Sigmoid colon (tissue), 7 donors: ENCODE measurements at regions of chr12 and their contacts with region 1.

Region 1: GRCh38 chr12:44015335-44015941 is 179.6 kb downstream of the TMEM117 start:
- DNase-seq: no peak
- H3K4me3 ChIP-seq: no peak overlapping the region
- H3K27ac ChIP-seq: no peak overlapping the region
- H3K4me1 ChIP-seq: peaks cover 0 to 8% (median 0%) of the 10 kb centered on the region in 4 donors
- H3K27me3 ChIP-seq: no peaks in the 10 kb centered on the region
- CTCF ChIP-seq: peak in 2 of 4 experiments; percentile 26 to 51
- EP300 ChIP-seq: no peak
- POLR2A ChIP-seq: no peak

Region 2: GRCh38 chr12:43893670-43894069 is 121.8 kb before region 1 on chr12:
- intact Hi-C with region 1: no loop called
- DNase-seq: no peak
- H3K4me3 ChIP-seq: no peak overlapping the region
- H3K27ac ChIP-seq: no peak overlapping the region
- H3K4me1 ChIP-seq: no peaks in the 10 kb centered on the region
- H3K27me3 ChIP-seq: no peaks in the 10 kb centered on the region
- CTCF ChIP-seq: no peak
- EP300 ChIP-seq: no peak
- POLR2A ChIP-seq: no peak

Region 3: DNA sequence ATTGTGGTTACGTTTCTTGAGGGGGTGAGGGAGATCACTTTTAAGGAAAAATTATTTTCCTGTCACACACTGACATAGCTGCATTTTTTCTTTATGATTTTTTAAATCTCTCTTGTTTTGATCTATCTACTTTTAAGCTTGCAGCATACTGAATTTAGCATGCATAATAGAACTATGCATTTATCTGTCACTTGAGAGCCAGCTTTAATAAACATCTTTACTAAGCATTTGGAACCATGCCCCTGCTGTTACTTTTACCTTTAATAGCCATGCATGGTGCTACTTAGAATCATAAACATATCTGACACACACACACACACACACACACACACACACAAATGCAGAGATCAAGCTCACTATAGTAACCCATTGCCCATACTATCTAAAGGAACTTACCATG is 374.5 kb after region 1 on chr12:
- intact Hi-C with region 1: no loop called
- DNase-seq: no peak
- H3K4me3 ChIP-seq: no peak overlapping the region
- H3K27ac ChIP-seq: no peak overlapping the region
- H3K4me1 ChIP-seq: peaks cover 0 to 12% (median 3%) of the 10 kb centered on the region in 4 donors
- H3K27me3 ChIP-seq: no peaks in the 10 kb centered on the region
- CTCF ChIP-seq: no peak
- EP300 ChIP-seq: no peak
- POLR2A ChIP-seq: no peak

Region 4: GRCh38 chr12:44654646-44655639 is 639.5 kb after region 1 on chr12:
- intact Hi-C with region 1: no loop called
- DNase-seq: no peak
- H3K4me3 ChIP-seq: no peak overlapping the region
- H3K27ac ChIP-seq: no peak overlapping the region
- H3K4me1 ChIP-seq: no peaks in the 10 kb centered on the region
- H3K27me3 ChIP-seq: no peaks in the 10 kb centered on the region
- CTCF ChIP-seq: no peak
- EP300 ChIP-seq: no peak
- POLR2A ChIP-seq: no peak

Region 5: DNA sequence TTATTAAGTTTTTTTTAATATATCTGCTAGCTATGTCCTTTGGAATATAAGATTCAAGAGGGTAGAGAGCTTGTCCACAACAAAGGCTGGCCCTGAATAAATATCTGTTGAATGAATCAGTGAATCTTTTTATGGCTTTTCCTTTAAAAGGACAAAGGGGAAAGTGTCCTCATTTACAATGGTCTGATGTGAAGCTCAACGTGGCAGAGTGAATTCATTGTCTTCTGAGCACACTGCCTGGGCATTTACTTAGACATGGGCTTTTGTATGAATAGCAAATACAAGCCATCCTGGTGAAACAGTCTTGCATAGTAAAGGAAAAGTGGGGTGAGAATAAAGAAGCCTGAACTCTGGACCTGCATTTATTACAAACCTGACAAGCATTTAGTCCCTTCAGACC is 659.4 kb after region 1 on chr12:
- intact Hi-C with region 1: no loop called
- DNase-seq: no peak
- H3K4me3 ChIP-seq: no peak overlapping the region
- H3K27ac ChIP-seq: no peak overlapping the region
- H3K4me1 ChIP-seq: no peaks in the 10 kb centered on the region
- H3K27me3 ChIP-seq: no peaks in the 10 kb centered on the region
- CTCF ChIP-seq: no peak
- EP300 ChIP-seq: no peak
- POLR2A ChIP-seq: no peak

Region 6: GRCh38 chr12:44930972-44931600 is 915.6 kb after region 1 on chr12:
- intact Hi-C with region 1: loop called (anchors 2 kb)
- DNase-seq: no peak
- H3K4me3 ChIP-seq: no peak overlapping the region
- H3K27ac ChIP-seq: no peak overlapping the region
- H3K4me1 ChIP-seq: no peaks in the 10 kb centered on the region
- H3K27me3 ChIP-seq: no peaks in the 10 kb centered on the region
- CTCF ChIP-seq: peak in 3 of 4 experiments; percentile 18 to 50 (median 39)
- EP300 ChIP-seq: no peak
- POLR2A ChIP-seq: no peak